ENCODE measurements at regions of chr7 and their contacts with region 1.

Region 1: DNA sequence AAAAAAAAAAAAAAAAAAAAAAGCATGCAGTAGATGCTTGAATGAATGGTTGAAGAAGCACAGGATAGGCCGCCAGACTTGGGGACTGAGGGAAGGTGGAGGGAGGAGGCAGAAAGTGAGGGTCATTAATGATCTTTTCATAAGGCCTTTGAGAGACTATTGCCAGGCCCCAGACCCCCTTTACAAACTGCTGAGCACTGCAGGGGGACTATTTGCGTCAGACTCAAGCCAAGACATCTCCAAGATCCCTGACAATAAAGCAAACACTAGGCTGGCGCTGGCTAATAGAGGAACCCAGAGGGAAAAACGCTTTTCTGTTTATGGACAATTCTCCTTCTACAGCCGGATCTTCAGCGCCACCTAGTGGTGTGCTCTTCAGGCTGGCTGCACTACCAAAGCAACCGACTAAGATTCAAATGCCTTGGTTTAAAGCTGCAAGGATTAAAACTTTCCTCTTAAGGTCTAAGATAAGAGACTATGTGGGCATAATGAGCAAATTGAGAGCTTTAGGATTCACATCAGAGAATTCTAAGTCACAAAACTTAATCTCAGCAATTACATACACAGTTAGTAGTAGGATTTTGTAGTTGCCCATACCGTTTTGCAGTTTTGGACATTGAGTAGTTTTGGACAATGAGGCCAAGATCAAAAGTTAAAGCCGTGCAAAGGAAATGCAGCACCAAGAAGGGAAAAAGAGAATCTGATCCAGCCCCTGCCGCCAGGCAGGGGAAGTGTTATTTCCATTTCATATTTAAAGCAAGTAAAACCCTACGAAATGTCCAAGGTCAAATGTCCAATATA is 17.9 kb upstream of the AGK start:
- DNase-seq: no peak
- H3K4me3 ChIP-seq: no peak overlapping the region
- H3K27ac ChIP-seq: no peak overlapping the region
- H3K4me1 ChIP-seq: peaks cover 0 to 5% (median 0%) of the 10 kb centered on the region in 3 donors
- H3K27me3 ChIP-seq: peaks cover 0 to 6% (median 0%) of the 10 kb centered on the region in 4 donors
- CTCF ChIP-seq: peak; percentile 83 to 96 (median 86)
- POLR2A ChIP-seq: no peak

Region 2: DNA sequence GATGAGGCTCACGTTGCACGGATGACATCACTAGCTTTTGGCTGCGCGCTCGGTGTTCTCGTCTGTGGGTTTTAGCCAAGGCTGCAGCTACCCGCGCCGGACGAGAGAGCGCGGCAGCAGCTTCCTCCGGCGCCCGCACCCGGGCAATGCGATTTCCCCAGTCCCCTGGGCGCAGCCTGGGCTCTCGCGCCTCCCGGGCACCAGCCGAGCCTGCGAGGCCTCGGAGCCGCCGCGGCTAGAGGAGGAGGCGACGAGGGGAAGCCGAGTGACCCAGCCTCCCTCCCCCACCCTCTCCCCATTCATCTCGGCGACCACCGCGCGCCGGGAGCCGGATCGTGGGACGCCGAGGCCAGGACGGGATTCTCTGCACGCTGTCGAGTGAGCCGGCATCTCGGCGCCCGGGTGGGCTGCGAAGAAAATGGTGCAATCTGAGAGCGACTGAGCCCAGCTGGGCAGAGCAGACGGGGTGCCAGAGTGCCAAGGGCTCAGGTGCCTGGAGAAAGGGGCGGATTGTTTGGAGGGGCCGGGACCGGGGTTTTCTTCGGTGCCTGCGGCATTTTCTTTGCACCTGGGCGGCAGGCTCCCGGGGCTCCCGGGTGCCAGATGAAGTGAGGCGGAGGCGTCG is 460.7 kb before region 1 on chr7:
- intact Hi-C with region 1: loop called (anchors 10 kb)
- DNase-seq: no peak
- H3K4me3 ChIP-seq: peak overlapping the region; percentile 47 to 73 (median 56)
- H3K27ac ChIP-seq: peak overlapping the region; percentile 30 to 71 (median 58)
- H3K4me1 ChIP-seq: peaks cover 19 to 45% (median 24%) of the 10 kb centered on the region in 3 donors
- H3K27me3 ChIP-seq: peaks cover 0 to 67% (median 0%) of the 10 kb centered on the region in 4 donors
- CTCF ChIP-seq: no peak
- POLR2A ChIP-seq: peak in 1 of 4 donors; percentile 16

Region 3: DNA sequence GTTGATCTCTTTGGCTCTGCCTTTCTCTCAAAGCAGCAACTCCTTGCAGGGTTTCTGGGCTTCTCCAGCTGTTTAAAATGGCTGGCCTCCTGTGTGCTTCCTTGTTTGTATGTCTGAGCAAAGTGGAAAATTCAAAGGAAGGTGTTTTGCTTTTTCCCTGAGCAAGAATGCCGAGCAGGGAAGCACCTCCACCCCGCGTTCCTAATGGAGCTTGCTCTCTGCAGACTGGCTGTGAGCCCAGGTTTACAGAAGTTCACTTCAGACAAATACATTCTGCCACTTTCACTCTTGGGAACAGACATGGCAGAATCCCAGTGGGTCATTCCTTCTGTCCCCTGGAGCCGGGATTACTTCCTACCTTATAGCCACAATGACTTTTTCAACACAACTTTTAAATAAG is 163.9 kb before region 1 on chr7:
- intact Hi-C with region 1: no loop called
- DNase-seq: no peak
- H3K4me3 ChIP-seq: no peak overlapping the region
- H3K27ac ChIP-seq: peak overlapping the region in 2 of 4 donors; percentile 48 to 61
- H3K4me1 ChIP-seq: peaks cover 0 to 36% (median 3%) of the 10 kb centered on the region in 3 donors
- H3K27me3 ChIP-seq: no peaks in the 10 kb centered on the region
- CTCF ChIP-seq: no peak
- POLR2A ChIP-seq: no peak

Region 4: DNA sequence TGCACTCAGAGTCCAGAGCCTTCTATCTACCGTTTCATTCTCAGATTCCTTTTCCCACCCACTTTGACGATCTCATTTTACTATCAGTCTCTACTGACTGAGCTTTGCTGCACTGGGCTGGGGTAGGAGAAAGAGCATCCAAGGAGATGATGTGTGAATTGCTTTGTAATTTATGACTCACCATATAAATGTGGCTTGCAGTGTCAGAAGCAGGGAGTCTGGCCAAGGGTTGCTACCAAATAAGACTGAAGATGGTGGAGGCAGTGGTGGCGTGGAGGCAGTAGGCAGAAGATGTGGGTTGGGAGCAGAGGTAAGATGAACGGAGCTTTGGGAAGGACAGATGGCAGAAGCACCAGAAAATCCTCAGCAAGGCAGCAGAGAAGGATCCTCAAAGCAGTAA is 55.5 kb before region 1 on chr7:
- intact Hi-C with region 1: no loop called
- DNase-seq: no peak
- H3K4me3 ChIP-seq: no peak overlapping the region
- H3K27ac ChIP-seq: no peak overlapping the region
- H3K4me1 ChIP-seq: no peaks in the 10 kb centered on the region
- H3K27me3 ChIP-seq: peaks cover 0 to 4% (median 0%) of the 10 kb centered on the region in 4 donors
- CTCF ChIP-seq: no peak
- POLR2A ChIP-seq: no peak

Measured in esophagus squamous epithelium (tissue), 5 donors.